PC-9 (cell line): ENCODE measurements at regions of chr17 and their contacts with region 1.

Region 1: GRCh38 chr17:38853292-38854219 is at the start of gene RPL23:
- DNase-seq: peak; percentile 85 to 91
- H3K4me3 ChIP-seq: peak within 1 kb of the TSS; percentile 88
- H3K27ac ChIP-seq: peak within 1 kb of the TSS; percentile 90
- H3K4me1 ChIP-seq: peaks cover 27% of the 10 kb centered on the region
- H3K27me3 ChIP-seq: no peaks in the 10 kb centered on the region
- CTCF ChIP-seq: no peak
- total RNA-seq, gene RPL23: 1,146 and 1,262 TPM in 2 replicates

Region 2: GRCh38 chr17:38824899-38825761 is 28.4 kb before region 1 on chr17 and contains the start of gene CWC25:
- CTCF ChIA-PET with region 1: interaction called, 9 read pairs
- POLR2A ChIA-PET with region 1: no interaction called
- intact Hi-C with region 1: loop called (anchors 1 kb)
- DNase-seq: peak; percentile 81 to 94
- H3K4me3 ChIP-seq: peak within 1 kb of the TSS; percentile 82
- H3K27ac ChIP-seq: peak within 1 kb of the TSS; percentile 97
- H3K4me1 ChIP-seq: peaks cover 16% of the 10 kb centered on the region
- H3K27me3 ChIP-seq: no peaks in the 10 kb centered on the region
- CTCF ChIP-seq: no peak
- total RNA-seq, gene CWC25: 13.7 and 13.9 TPM in 2 replicates

Region 3: DNA sequence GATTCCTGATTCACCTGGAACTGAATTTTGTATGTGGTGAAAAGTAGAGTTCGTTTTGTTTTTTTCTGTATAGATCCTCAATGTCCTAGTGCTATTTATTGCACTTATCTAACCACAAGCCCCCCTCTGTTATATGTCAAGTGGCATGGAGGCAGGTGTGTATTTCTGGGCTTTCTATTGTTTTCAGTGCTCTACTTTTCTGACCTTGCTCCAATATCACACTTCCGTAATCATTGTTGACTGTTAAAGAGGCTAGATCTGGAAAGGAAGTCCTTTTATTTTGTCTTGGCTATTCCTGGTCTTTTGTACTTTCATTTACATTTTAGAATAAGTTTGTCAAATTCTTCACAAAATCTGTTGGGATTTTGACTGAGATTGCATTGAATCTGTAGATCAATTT is 140.5 kb after region 1 on chr17:
- CTCF ChIA-PET with region 1: no interaction called
- POLR2A ChIA-PET with region 1: interaction called, 14 read pairs
- intact Hi-C with region 1: no loop called
- DNase-seq: no peak
- H3K4me3 ChIP-seq: no peak overlapping the region
- H3K27ac ChIP-seq: no peak overlapping the region
- H3K4me1 ChIP-seq: peaks cover 6% of the 10 kb centered on the region
- H3K27me3 ChIP-seq: no peaks in the 10 kb centered on the region
- CTCF ChIP-seq: no peak